Sigmoid colon (tissue), 7 donors: ENCODE measurements at regions of chr20 and their contacts with region 1.

Region 1: DNA sequence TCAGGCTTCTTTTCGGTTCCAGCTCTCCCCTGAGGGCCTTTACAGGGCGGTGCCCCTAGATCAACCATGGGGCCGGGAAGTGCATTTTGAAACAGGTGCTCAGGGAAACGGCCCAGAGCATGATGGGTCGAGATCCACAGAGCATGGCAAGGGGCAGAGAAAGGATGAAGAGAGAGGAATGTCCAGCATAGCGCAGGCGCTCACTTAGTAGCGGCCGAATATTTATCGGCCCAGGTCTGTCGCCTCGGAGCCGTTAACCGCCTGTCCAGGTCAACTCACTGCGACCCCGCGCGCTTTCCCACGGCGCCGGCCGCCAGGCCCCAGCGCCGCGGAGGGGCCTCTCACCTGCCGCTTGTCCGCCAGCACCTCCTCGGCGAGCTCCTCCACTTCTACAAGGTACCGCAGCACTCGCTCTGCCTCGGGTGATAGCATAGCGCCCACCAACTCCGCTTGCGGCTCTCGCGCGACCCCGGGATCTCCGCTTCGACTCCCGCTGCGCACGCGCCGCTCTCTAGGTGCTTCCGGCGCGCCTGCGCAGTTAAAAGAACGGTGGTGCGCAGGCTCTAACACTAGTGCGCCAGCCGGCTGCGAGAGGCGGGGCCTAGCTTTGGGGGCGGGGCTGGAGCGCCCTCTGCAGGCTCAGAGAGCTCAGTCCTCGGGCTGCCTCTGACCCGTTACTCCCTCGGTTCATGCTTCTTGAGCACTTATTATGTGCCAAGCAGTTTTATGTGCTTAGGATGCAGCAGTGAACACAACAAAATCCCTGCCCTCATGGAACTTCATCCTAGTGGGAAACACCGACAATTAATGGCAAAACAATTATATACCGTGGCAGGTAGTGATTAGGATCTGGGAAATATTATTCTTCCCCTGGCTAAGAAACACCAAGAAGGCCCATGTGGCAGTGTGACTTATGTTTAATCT is at the start of gene PDRG1:
- DNase-seq: peak; percentile 97
- H3K4me3 ChIP-seq: peak within 1 kb of the TSS; percentile 72 to 99 (median 80)
- H3K27ac ChIP-seq: peak within 1 kb of the TSS; percentile 75 to 84 (median 80)
- H3K4me1 ChIP-seq: peaks cover 0 to 17% (median 15%) of the 10 kb centered on the region in 4 donors
- H3K27me3 ChIP-seq: peaks cover 0 to 6% (median 4%) of the 10 kb centered on the region in 3 donors
- CTCF ChIP-seq: peak; percentile 78 to 88 (median 86)
- EP300 ChIP-seq: no peak
- POLR2A ChIP-seq: peak in 1 of 2 donors; percentile 35
- total RNA-seq, gene PDRG1: 5.0 to 13.7 (median 7.3) TPM

Region 2: DNA sequence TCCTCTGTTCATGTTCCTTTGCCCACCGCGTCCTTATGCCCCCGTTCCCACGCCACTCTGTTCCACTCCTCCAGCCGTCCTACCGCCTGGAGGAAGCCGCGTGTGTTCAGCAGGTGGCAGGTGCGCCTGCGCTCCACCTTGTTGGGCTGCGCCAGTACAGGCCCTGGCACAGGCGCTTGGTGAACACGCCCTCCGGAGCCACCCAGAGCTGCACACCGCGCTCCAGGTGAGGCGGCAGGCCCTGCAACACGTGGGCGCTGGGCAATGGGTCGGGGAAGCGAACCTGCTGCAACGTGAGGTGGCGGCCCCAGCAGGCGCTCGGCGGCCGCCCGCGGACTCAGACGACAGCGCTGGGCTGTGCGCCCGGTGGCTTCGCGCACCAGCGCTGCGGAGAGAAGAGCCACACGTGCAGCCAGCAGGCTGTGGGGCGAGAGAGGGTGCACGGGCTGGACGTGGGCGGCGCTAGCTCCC is 102.3 kb before region 1 on chr20:
- intact Hi-C with region 1: loop called (anchors 1 kb)
- DNase-seq: no peak
- H3K4me3 ChIP-seq: no peak overlapping the region
- H3K27ac ChIP-seq: no peak overlapping the region
- H3K4me1 ChIP-seq: peaks cover 0 to 7% (median 0%) of the 10 kb centered on the region in 4 donors
- H3K27me3 ChIP-seq: peaks cover 4 to 37% (median 10%) of the 10 kb centered on the region in 3 donors
- CTCF ChIP-seq: no peak
- EP300 ChIP-seq: no peak
- POLR2A ChIP-seq: no peak

Region 3: DNA sequence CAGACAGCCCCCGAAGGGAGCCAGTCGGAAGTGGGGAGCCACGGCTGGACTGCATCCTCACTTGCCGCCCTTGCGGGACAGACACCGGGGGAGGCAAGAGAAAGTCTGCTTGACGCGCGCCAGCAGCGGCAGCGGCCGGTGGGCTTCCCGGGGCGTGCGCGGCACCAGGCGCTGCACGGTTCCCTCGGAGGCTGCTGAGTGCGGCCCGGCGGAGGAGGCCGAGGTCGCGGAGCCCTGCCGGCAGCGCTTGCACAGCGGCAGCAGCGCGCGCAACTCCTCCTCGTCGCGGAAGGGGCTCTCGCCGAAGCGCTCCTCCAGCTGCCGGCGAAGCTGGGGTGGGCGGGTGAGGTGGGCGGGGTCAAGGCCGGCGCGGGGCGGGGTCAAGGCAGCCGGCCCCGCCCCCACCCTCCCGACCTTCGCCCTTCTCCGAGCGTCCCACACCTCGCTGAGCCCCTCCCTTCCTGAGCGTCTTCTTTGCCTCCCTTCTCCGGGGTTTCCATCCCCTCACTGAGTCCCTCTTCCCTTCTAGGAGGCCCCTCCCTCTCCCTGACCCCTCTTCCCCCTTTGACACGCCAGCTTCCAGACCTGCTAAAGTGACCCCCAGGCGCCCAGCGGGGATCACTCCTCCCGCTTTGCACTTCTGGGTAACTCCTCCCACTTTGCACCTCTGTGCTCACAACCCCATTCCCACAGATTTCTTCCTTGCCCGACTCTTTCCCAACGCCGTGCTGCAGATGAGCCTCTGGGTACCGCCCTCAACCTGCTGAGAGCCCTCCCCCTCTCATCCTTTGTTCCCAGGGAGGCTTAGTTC is 90.2 kb before region 1 on chr20:
- intact Hi-C with region 1: no loop called
- DNase-seq: no peak
- H3K4me3 ChIP-seq: peak overlapping the region; percentile 17 to 55 (median 46)
- H3K27ac ChIP-seq: peak overlapping the region in 2 of 4 donors; percentile 14
- H3K4me1 ChIP-seq: peaks cover 0 to 20% (median 17%) of the 10 kb centered on the region in 4 donors
- H3K27me3 ChIP-seq: peaks cover 8 to 56% (median 39%) of the 10 kb centered on the region in 3 donors
- CTCF ChIP-seq: no peak
- EP300 ChIP-seq: no peak
- POLR2A ChIP-seq: no peak

Region 4: GRCh38 chr20:31879143-31879987 is 72.4 kb before region 1 on chr20:
- intact Hi-C with region 1: loop called (anchors 5 kb)
- DNase-seq: peak; percentile 98
- H3K4me3 ChIP-seq: peak overlapping the region; percentile 34 to 63 (median 56)
- H3K27ac ChIP-seq: peak overlapping the region; percentile 69 to 81 (median 75)
- H3K4me1 ChIP-seq: peaks cover 0 to 11% (median 2%) of the 10 kb centered on the region in 4 donors
- H3K27me3 ChIP-seq: no peaks in the 10 kb centered on the region
- CTCF ChIP-seq: no peak
- EP300 ChIP-seq: no peak
- POLR2A ChIP-seq: no peak